ENCODE measurements at regions of chr12 and their contacts with region 1.

Region 1: GRCh38 chr12:1583421-1584078 is 10.8 kb downstream of the FBXL14 start:
- DNase-seq: peak; percentile 64 to 75 (median 71)
- ATAC-seq: peak; percentile 77
- H3K4me3 ChIP-seq: no peak overlapping the region
- H3K27ac ChIP-seq: no peak overlapping the region
- H3K4me1 ChIP-seq: peaks cover 21% of the 10 kb centered on the region
- H3K27me3 ChIP-seq: no peaks in the 10 kb centered on the region
- CTCF ChIP-seq: peak; percentile 60 to 90 (median 86)
- POLR2A ChIP-seq: no peak

Region 2: GRCh38 chr12:1117970-1118563 is 465.5 kb before region 1 on chr12:
- intact Hi-C with region 1: loop called (anchors 10 kb)
- DNase-seq: peak; percentile 82 to 89 (median 86)
- ATAC-seq: peak; percentile 75
- H3K4me3 ChIP-seq: no peak overlapping the region
- H3K27ac ChIP-seq: no peak overlapping the region
- H3K4me1 ChIP-seq: no peaks in the 10 kb centered on the region
- H3K27me3 ChIP-seq: no peaks in the 10 kb centered on the region
- CTCF ChIP-seq: peak; percentile 78 to 98 (median 95)
- POLR2A ChIP-seq: no peak